Left lung (tissue), 14 donors: ENCODE measurements at regions of chr2 and their contacts with region 1.

Region 1: GRCh38 chr2:218466016-218466521 is 47.1 kb downstream of the VIL1 start:
- DNase-seq: peak in 2 of 4 donors; percentile 38 to 46
- ATAC-seq: peak; percentile 71
- H3K4me3 ChIP-seq: no peak overlapping the region
- H3K27ac ChIP-seq: no peak overlapping the region
- H3K4me1 ChIP-seq: peaks cover 0 to 12% of the 10 kb centered on the region in 2 donors
- H3K27me3 ChIP-seq: no peaks in the 10 kb centered on the region
- CTCF ChIP-seq: peak; percentile 22 to 37

Region 2: DNA sequence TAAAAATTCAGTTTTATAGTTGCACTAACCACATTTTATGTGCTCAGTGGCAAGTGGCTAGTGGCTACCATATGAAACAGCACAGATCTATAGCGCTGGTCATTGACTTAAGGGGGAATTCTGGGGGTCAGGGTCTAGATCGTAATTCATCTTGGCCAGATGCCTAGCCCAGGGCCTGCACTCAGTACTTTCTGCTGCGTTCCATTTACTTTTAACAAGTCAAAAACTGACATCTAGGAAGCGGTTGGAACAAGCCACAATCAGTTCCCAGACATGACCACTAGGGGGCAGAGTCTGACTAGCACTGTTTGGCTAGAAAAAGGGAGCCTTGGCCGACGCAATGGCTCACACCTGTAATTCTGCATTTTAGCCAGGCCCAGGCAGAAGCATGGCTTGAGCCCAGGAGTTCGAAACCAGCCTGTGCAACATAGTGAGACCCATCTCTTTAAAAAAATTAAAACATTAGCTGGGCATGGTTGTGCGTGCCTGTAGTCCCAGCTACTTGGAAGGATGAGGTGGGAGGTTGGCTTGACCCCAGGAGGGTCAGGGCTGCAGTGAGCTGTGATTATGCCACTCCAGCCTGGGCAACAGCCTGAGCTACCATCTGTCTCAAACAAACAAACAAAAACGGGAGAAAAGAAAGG is 164.8 kb before region 1 on chr2:
- intact Hi-C with region 1: loop called in 1 of 2 experiments (anchors 10 kb)
- DNase-seq: peak in 3 of 4 donors; percentile 71 to 89 (median 85)
- ATAC-seq: peak; percentile 94
- H3K4me3 ChIP-seq: no peak overlapping the region
- H3K27ac ChIP-seq: no peak overlapping the region
- H3K4me1 ChIP-seq: peaks cover 0 to 11% of the 10 kb centered on the region in 2 donors
- H3K27me3 ChIP-seq: no peaks in the 10 kb centered on the region
- CTCF ChIP-seq: peak; percentile 98

Region 3: GRCh38 chr2:218406209-218406948 is 59.7 kb before region 1 on chr2:
- intact Hi-C with region 1: loop called in 1 of 2 experiments (anchors 5 kb)
- DNase-seq: peak; percentile 89 to 100 (median 97)
- ATAC-seq: peak; percentile 90
- H3K4me3 ChIP-seq: peak overlapping the region; percentile 41 to 43
- H3K27ac ChIP-seq: peak overlapping the region; percentile 93
- H3K4me1 ChIP-seq: peaks cover 27 to 66% of the 10 kb centered on the region in 2 donors
- H3K27me3 ChIP-seq: no peaks in the 10 kb centered on the region
- CTCF ChIP-seq: peak; percentile 75